Caco-2 (cell line): ENCODE measurements at regions of chrX and their contacts with region 1.

Region 1: GRCh38 chrX:24676403-24677024 is 17.2 kb upstream of the POLA1 start:
- DNase-seq: peak in 1 of 2 experiments; percentile 13
- H3K4me3 ChIP-seq: no peak overlapping the region
- H3K4me3 Mint-ChIP-seq: no peak overlapping the region
- H3K27ac Mint-ChIP-seq: no peak overlapping the region
- H3K4me1 ChIP-seq: peaks cover 10% of the 10 kb centered on the region
- H3K4me1 Mint-ChIP-seq: no peaks in the 10 kb centered on the region
- H3K27me3 ChIP-seq: no peaks in the 10 kb centered on the region
- H3K27me3 Mint-ChIP-seq: no peaks in the 10 kb centered on the region
- CTCF ChIP-seq: peak; percentile 31 to 48

Region 2: GRCh38 chrX:24658411-24658810 is 18.1 kb before region 1 on chrX:
- CTCF ChIA-PET with region 1: interaction called, 12 read pairs
- POLR2A ChIA-PET with region 1: interaction called, 9 read pairs
- intact Hi-C with region 1: loop called (anchors 1 kb)
- DNase-seq: peak; percentile 44 to 48
- H3K4me3 ChIP-seq: no peak overlapping the region
- H3K4me3 Mint-ChIP-seq: no peak overlapping the region
- H3K27ac Mint-ChIP-seq: peak overlapping the region; percentile 8
- H3K4me1 ChIP-seq: peaks cover 25% of the 10 kb centered on the region; the same call in 1 of the 2 replicates
- H3K4me1 Mint-ChIP-seq: peaks cover 6% of the 10 kb centered on the region
- H3K27me3 ChIP-seq: no peaks in the 10 kb centered on the region
- H3K27me3 Mint-ChIP-seq: no peaks in the 10 kb centered on the region
- CTCF ChIP-seq: no peak

Region 3: DNA sequence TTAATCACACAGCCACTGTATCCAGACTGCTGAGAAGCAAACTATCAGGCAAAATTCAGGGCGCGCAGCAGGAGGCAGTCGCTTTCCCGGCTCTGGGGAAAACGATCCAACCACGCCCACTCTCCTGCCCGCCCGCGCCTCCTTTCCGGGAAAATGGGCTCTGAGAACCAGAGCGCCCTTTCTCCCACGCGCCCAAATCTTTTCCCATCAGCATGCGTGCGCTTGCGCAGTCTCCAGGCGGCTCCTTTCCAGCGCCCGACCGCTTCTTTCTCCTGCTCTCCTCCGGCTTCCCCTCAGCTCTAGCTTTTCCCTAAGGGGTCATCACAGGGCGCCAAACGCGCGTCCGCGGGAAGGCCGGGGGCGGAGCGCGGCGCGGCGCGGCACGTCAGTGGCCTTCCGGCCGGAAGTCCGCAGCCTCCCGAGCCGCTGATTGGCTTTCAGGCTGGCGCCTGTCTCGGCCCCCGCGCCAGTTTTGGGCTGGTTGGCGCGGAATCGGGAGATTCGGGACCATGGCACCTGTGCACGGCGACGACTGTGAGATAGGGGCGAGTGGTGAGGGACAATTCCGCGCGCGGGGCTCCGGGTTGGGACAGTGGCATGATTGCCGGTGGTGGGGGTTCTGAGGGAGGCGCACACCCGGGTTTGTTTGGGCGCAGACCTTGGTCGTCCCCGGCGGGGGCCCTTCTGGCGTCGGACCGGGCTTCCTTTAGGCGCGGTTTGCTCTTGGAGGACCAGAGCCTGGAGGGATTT is 17.1 kb after region 1 on chrX and contains the start of gene POLA1:
- CTCF ChIA-PET with region 1: interaction called, 3 read pairs
- POLR2A ChIA-PET with region 1: interaction called, 4 read pairs
- intact Hi-C with region 1: loop called (anchors 1 kb)
- DNase-seq: peak; percentile 94 to 96
- H3K4me3 ChIP-seq: peak within 1 kb of the TSS; percentile 75
- H3K4me3 Mint-ChIP-seq: peak within 1 kb of the TSS; percentile 81
- H3K27ac Mint-ChIP-seq: peak within 1 kb of the TSS; percentile 95
- H3K4me1 ChIP-seq: no peaks in the 10 kb centered on the region
- H3K4me1 Mint-ChIP-seq: peaks cover 5% of the 10 kb centered on the region
- H3K27me3 ChIP-seq: no peaks in the 10 kb centered on the region
- H3K27me3 Mint-ChIP-seq: no peaks in the 10 kb centered on the region
- CTCF ChIP-seq: peak in 1 of 2 experiments; percentile 45
- total RNA-seq, gene POLA1: 21.6 and 23.5 TPM in 2 replicates

Region 4: GRCh38 chrX:24799565-24799964 is 123.1 kb after region 1 on chrX:
- CTCF ChIA-PET with region 1: no interaction called
- POLR2A ChIA-PET with region 1: interaction called, 10 read pairs
- intact Hi-C with region 1: no loop called
- DNase-seq: no peak
- H3K4me3 ChIP-seq: no peak overlapping the region
- H3K4me3 Mint-ChIP-seq: no peak overlapping the region
- H3K27ac Mint-ChIP-seq: no peak overlapping the region
- H3K4me1 ChIP-seq: no peaks in the 10 kb centered on the region
- H3K4me1 Mint-ChIP-seq: peaks cover 8% of the 10 kb centered on the region
- H3K27me3 ChIP-seq: no peaks in the 10 kb centered on the region
- H3K27me3 Mint-ChIP-seq: no peaks in the 10 kb centered on the region
- CTCF ChIP-seq: no peak